ENCODE measurements at regions of chr7 and their contacts with region 1.

Region 1: DNA sequence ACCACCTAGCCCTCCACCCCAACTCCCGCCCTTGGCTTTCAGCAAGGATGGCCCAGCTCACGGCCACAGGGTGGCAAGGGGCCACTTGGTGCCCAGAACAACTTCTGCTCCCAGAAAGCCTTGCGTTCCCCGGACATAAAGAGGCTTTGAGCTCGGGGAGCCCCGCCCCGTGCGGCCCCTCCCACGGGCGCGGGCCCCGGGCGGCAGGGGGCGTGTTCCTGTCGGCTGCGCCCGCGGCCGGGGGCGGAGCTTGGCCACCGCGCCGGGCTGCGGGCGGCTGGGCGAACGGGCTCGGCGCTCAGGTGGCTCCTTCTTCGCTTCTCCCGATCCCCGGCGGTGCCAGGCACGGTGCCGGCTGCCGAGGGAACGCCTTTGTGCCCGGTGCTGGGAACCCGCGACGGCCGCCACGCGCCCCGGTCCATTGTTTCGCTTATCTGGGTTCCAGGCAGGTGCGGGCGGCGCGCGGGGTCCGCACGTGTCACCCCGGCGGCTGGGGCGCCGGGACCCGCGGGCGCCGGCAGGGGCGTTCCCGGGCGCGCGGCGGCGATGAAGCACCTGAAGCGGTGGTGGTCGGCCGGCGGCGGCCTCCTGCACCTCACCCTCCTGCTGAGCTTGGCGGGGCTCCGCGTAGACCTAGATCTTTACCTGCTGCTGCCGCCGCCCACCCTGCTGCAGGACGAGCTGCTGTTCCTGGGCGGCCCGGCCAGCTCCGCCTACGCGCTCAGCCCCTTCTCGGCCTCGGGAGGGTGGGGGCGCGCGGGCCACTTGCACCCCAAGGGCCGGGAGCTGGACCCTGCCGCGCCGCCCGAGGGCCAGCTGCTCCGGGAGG is at the start of gene NFE2L3:
- DNase-seq: peak; percentile 82
- ATAC-seq: peak; percentile 90
- H3K4me3 Mint-ChIP-seq: peak within 1 kb of the TSS; percentile 94
- H3K27ac Mint-ChIP-seq: peak within 1 kb of the TSS; percentile 86
- H3K4me1 Mint-ChIP-seq: peaks cover 48% of the 10 kb centered on the region
- H3K27me3 Mint-ChIP-seq: no peaks in the 10 kb centered on the region
- CTCF ChIP-seq: no peak
- total RNA-seq, gene NFE2L3: 2.7 and 3.0 TPM in 2 replicates

Region 2: DNA sequence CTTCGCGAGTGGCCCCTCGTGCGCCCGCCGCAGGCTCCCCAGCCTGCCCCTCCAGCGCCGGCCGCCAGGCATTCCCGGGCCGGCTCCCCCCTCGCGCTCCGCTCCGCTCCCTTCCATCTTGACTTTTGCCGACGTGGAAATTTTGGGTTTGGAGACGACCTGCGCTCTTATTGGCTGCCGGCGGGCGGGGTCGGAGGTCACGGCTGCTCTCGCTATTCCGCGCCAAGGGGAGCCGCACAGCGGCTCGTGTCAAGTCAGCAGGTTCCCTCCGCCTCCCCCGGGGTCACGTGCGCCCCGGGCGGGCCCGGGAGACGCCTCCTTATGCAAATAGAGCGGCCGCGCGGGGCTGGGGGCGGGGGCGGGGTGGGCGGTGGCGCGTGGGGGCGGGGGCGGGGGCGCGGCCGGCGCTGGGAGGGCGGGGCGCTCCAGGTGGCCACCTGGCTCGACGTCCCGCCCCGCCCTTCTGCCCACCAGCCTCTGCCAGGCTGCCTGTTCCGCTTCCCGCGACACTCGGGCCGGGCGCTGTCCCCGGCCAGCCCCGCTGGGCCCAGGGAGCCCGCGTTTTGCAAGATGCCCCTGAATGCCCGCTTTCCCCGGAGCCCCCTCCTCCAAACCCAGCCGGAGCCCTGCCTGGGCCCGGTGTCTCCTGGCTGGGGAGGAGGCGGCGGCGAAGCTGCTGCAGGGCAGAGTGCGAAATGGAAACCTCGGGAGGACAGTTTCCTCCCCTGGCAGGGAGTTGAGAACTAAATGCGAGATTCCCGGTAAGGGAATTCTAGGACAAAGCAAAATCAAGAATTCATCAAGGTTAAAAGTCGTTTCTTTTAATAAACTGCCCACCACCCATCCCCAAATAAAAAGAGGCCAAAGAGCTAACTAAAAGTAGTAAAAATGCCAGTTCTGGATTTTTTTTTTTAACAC is 200.9 kb before region 1 on chr7:
- CTCF ChIA-PET with region 1: interaction called, 3 read pairs
- POLR2A ChIA-PET with region 1: no interaction called
- intact Hi-C with region 1: loop called (anchors 5 kb)
- DNase-seq: peak; percentile 82
- ATAC-seq: peak; percentile 93
- H3K4me3 Mint-ChIP-seq: peak overlapping the region; percentile 92
- H3K27ac Mint-ChIP-seq: peak overlapping the region; percentile 81
- H3K4me1 Mint-ChIP-seq: peaks cover 35% of the 10 kb centered on the region
- H3K27me3 Mint-ChIP-seq: peaks cover 31% of the 10 kb centered on the region
- CTCF ChIP-seq: no peak

Region 3: GRCh38 chr7:26052721-26053120 is 99.4 kb before region 1 on chr7:
- CTCF ChIA-PET with region 1: no interaction called
- POLR2A ChIA-PET with region 1: no interaction called
- intact Hi-C with region 1: no loop called
- DNase-seq: no peak
- ATAC-seq: no peak
- H3K4me3 Mint-ChIP-seq: no peak overlapping the region
- H3K27ac Mint-ChIP-seq: no peak overlapping the region
- H3K4me1 Mint-ChIP-seq: no peaks in the 10 kb centered on the region
- H3K27me3 Mint-ChIP-seq: peaks cover 40% of the 10 kb centered on the region
- CTCF ChIP-seq: no peak

Region 4: GRCh38 chr7:26078437-26079336 is 73.5 kb before region 1 on chr7:
- CTCF ChIA-PET with region 1: interaction called, 11 read pairs
- POLR2A ChIA-PET with region 1: interaction called, 6 read pairs
- intact Hi-C with region 1: no loop called
- DNase-seq: peak; percentile 73
- ATAC-seq: peak; percentile 100
- H3K4me3 Mint-ChIP-seq: no peak overlapping the region
- H3K27ac Mint-ChIP-seq: no peak overlapping the region
- H3K4me1 Mint-ChIP-seq: peaks cover 7% of the 10 kb centered on the region
- H3K27me3 Mint-ChIP-seq: peaks cover 33% of the 10 kb centered on the region
- CTCF ChIP-seq: no peak

Region 5: DNA sequence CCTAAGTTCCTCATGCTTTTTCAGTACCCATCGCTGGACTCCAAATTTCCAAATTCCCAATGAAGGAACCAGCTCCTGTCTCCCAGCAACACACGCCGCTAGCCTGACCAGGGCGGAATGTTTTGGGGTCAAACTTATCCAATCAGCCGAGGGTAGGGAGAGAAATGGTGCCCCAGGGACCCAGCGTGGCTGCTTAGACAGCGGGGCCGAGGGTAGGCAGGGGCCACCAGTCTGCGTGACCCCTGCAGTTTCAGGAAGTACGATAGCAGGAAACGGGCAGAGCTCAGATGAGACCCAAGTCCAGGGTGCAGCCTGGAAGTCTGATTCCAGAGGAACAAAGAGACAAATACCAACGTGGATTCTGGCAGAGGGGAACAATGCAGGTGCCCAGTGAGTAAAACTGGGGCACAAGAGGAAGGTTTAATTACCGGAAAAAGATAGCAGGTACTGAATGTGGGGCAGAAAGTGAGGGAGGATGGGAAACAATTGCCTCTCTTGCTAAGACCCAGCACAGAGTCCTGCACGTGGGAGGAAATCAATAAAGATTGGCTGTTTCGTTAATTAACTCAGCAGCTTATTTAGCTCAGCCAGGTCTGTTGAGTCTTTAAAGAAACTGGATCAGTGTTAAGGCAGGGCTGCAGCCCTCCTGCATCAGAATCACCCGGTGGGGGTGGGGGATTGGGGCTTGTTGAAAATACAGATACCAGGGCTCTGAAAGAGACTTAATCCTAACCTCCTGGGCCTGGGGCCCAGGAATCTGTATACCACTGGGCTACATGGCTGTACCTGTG is 50.6 kb before region 1 on chr7:
- CTCF ChIA-PET with region 1: interaction called, 3 read pairs
- POLR2A ChIA-PET with region 1: interaction called, 16 read pairs
- intact Hi-C with region 1: loop called (anchors 2 kb)
- DNase-seq: peak; percentile 35
- ATAC-seq: peak; percentile 76
- H3K4me3 Mint-ChIP-seq: peak overlapping the region; percentile 92
- H3K27ac Mint-ChIP-seq: peak overlapping the region; percentile 95
- H3K4me1 Mint-ChIP-seq: peaks cover 49% of the 10 kb centered on the region
- H3K27me3 Mint-ChIP-seq: no peaks in the 10 kb centered on the region
- CTCF ChIP-seq: no peak

Region 6: GRCh38 chr7:26172048-26172447 is 19.9 kb after region 1 on chr7:
- CTCF ChIA-PET with region 1: interaction called, 3 read pairs
- POLR2A ChIA-PET with region 1: interaction called, 8 read pairs
- intact Hi-C with region 1: loop called (anchors 2 kb)
- DNase-seq: no peak
- ATAC-seq: no peak
- H3K4me3 Mint-ChIP-seq: no peak overlapping the region
- H3K27ac Mint-ChIP-seq: no peak overlapping the region
- H3K4me1 Mint-ChIP-seq: peaks cover 6% of the 10 kb centered on the region
- H3K27me3 Mint-ChIP-seq: no peaks in the 10 kb centered on the region
- CTCF ChIP-seq: no peak

Region 7: DNA sequence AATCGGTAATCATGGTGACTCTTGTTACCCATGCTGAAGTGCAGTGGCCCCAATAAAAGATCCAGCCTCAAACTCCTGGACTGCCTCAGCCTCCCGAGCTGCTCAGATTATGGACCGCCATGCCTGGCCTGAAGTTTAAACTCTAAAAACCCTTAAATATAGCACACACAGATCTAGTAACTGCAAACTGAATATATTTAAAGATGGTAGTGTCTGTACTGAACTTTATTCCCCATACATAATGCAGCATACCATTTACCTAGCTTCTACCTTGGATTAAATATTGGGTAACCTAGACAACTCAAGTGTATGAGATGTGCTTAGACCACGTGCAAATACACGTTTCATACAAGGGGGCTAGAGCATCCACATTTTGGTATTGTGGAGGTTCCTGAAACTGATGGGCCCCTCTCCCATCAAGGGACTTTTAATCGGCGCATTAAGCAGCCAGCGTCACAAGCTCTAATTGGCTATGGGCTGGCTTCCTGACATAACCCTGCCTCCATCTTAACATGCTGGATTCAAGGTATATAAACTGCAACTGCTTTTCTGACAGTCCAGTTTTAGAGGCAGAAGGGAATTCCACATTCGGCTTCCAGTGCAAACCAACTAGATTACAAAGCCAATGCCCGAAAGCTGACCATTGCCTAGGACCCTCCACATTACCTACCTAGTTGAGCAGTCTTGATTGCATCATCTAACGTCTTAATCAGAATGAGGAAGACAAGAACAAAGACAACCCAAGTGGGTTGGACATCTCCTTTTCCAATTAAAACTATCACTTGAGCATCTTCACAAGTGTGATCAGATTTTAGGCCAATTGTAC is 35.4 kb after region 1 on chr7:
- CTCF ChIA-PET with region 1: interaction called, 5 read pairs
- POLR2A ChIA-PET with region 1: interaction called, 12 read pairs
- intact Hi-C with region 1: no loop called
- DNase-seq: no peak
- ATAC-seq: no peak
- H3K4me3 Mint-ChIP-seq: no peak overlapping the region
- H3K27ac Mint-ChIP-seq: peak overlapping the region; percentile 50
- H3K4me1 Mint-ChIP-seq: peaks cover 75% of the 10 kb centered on the region
- H3K27me3 Mint-ChIP-seq: no peaks in the 10 kb centered on the region
- CTCF ChIP-seq: no peak

Region 8: DNA sequence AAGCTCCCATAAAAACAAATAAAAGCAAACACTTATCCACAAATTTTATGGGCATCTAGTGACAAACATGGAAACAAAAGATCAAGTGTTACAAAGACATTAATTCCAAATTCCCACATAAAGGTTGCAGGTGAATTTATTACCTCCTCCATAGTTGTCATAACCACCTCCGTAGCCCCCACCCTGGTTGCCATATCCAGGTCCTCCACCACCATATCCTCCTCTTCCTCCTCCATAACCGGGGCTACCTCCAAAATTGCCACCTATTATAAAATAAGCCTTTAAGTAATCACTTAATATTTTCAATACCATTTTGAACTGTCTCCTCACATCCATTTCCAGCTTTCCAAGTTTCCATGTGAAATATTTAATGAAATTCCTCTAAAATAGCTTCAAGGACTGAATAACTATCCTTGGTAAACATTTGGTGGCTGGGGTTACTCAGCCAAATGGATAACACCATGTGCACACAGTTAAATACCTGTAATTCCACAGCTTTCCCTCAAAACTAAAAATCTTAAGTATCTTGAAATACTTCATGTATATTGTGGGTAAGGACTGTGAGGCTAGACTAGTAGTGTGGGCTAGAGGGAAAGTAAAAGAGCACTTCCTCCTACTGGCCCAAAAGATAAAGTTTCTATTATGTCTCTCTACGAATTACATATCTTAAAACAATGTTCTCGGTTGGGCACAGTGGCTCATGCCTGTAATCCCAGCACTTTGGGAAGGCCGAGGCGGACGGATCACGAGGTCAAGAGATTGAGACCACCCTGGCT is 41.5 kb after region 1 on chr7:
- CTCF ChIA-PET with region 1: interaction called, 15 read pairs
- POLR2A ChIA-PET with region 1: interaction called, 72 read pairs
- intact Hi-C with region 1: no loop called
- DNase-seq: no peak
- ATAC-seq: no peak
- H3K4me3 Mint-ChIP-seq: peak overlapping the region; percentile 68
- H3K27ac Mint-ChIP-seq: peak overlapping the region; percentile 77
- H3K4me1 Mint-ChIP-seq: peaks cover 78% of the 10 kb centered on the region
- H3K27me3 Mint-ChIP-seq: no peaks in the 10 kb centered on the region
- CTCF ChIP-seq: no peak

Region 9: DNA sequence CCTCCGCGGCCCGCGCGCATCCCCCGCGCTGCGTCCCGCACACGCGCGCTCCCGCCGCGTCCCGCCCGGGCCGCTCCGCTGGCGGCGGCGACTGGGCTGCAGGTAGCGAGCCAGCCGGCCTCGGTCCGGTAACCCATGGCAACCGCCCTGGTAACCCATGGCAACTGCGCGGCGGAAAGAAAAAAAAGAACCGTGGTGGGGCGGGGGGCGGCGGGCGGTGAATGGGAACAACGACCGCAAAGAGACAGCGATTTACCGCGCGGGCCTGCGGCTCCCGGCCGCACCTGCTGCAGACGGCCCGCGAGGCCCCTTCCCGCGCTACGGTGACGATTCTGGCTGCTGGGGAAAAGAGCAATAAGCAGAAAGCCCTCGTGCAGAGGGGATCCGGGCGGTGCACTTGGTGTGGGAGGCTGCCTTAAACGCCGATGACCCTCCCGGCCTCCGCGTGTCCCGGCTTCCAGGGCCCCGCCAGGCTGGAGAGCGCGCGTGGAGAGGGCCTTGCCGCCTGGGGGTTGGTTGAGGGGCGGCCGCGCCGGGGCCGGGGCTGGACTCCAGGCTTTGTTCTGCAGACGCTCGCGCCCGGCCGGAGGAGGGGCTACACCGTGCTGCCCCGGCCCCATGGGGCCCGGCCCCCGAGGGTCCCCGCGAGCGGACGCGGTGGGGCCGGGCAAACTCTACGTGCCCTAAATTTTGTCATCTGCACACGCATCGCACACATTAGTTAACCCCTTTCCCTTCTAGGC is 224.2 kb after region 1 on chr7:
- CTCF ChIA-PET with region 1: no interaction called
- POLR2A ChIA-PET with region 1: no interaction called
- intact Hi-C with region 1: no loop called
- DNase-seq: peak; percentile 47
- ATAC-seq: peak; percentile 46
- H3K4me3 Mint-ChIP-seq: peak overlapping the region; percentile 83
- H3K27ac Mint-ChIP-seq: no peak overlapping the region
- H3K4me1 Mint-ChIP-seq: peaks cover 4% of the 10 kb centered on the region
- H3K27me3 Mint-ChIP-seq: peaks cover 2% of the 10 kb centered on the region
- CTCF ChIP-seq: no peak

Measured in activated B cell treated with CpG ODN at 0.5 μM for 24 hours (primary cell).